MCF 10A (cell line): ENCODE measurements at regions of chr10 and their contacts with region 1.

Region 1: DNA sequence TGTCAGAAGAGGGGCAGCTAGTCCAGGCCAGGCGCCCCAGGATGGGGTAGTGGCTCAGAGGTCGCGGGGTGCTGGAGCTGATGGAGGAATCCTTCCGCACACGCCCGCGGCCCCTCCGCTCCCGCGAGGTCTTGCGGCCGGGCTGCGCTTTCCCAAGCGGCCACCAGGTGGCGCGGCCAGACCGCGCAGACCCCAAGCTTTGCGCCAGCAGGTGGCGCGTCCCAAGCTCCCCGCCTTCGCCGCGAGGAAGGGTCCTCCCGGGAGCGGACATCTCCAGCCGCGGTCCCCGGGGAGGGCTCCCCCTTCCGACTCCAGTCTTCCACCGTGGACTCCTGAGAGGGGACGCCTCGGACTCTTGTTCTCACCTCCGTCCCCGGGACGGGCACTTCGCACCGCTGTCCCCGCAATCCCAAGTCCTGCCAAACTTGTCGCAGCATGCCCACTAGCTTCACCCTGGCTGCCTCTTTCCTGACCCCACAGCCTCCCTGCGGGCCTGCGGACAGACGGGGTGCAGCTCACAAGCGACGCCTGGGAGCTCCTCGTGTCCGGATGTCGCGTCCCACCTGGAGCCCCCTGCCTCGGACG is 19.4 kb downstream of the KCNK18 start:
- DNase-seq: peak; percentile 62
- H3K4me3 Mint-ChIP-seq: peak overlapping the region; percentile 78
- H3K27ac Mint-ChIP-seq: no peak overlapping the region
- H3K4me1 Mint-ChIP-seq: no peaks in the 10 kb centered on the region
- H3K27me3 Mint-ChIP-seq: peaks cover 34% of the 10 kb centered on the region
- CTCF ChIP-seq: peak; percentile 100

Region 2: GRCh38 chr10:117137031-117137910 is 79.4 kb before region 1 on chr10:
- CTCF ChIA-PET with region 1: no interaction called
- POLR2A ChIA-PET with region 1: no interaction called
- intact Hi-C with region 1: no loop called
- DNase-seq: no peak
- H3K4me3 Mint-ChIP-seq: no peak overlapping the region
- H3K27ac Mint-ChIP-seq: no peak overlapping the region
- H3K4me1 Mint-ChIP-seq: no peaks in the 10 kb centered on the region
- H3K27me3 Mint-ChIP-seq: peaks cover 22% of the 10 kb centered on the region
- CTCF ChIP-seq: no peak

Region 3: DNA sequence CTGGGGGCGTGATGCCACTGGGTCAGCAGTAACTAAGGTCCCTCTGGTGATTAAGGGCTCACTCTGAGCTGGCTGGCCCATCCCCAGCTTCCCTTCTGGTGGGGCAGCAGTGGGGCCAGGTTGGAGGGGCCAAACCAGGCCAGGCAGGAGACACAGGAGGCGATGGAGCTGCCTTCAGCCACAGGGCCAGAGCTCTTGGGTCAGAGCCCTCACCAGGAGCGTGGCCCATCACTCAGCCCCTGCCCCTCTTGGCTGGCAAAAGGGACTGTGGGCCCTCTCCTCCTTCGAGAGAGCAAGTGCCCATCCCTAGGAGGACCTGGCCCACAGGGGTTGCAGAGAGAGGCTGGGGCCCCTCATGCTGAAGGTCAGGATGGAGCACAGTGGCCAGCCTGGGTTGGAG is 14.9 kb before region 1 on chr10:
- CTCF ChIA-PET with region 1: interaction called, 25 read pairs
- POLR2A ChIA-PET with region 1: no interaction called
- intact Hi-C with region 1: no loop called
- DNase-seq: no peak
- H3K4me3 Mint-ChIP-seq: no peak overlapping the region
- H3K27ac Mint-ChIP-seq: no peak overlapping the region
- H3K4me1 Mint-ChIP-seq: no peaks in the 10 kb centered on the region
- H3K27me3 Mint-ChIP-seq: peaks cover 11% of the 10 kb centered on the region
- CTCF ChIP-seq: no peak

Region 4: DNA sequence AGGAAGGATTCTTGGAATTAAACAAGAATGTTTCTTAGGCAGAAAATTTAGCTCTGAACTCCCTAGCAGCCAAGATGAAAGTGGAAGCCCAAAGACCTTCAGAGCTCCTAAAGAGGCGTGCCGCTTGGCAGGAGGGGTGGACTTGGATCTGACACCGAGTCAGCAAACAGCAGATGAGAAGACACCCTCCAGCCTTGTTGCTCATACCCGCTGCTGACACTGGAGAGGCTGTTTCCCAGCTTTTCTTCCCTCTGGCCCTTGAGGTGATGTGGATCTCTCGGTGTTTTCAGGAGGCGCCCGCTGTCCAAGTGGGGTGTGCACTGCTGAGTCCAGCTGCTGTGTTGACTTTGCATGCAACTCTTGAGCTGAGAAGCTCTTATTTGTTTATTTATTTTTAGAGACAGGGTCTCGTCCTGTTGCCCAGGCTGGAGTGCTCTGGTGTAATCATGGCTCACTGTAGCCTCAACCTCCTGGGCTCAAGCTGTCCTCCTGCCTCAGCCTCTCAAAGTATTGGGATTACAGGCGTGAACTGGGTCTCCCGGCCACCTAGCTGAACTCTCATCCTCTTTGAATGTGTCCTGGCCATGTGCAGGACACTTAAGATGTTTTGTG is 45.7 kb after region 1 on chr10:
- CTCF ChIA-PET with region 1: interaction called, 15 read pairs
- POLR2A ChIA-PET with region 1: no interaction called
- intact Hi-C with region 1: no loop called
- DNase-seq: no peak
- H3K4me3 Mint-ChIP-seq: no peak overlapping the region
- H3K27ac Mint-ChIP-seq: no peak overlapping the region
- H3K4me1 Mint-ChIP-seq: no peaks in the 10 kb centered on the region
- H3K27me3 Mint-ChIP-seq: peaks cover 54% of the 10 kb centered on the region
- CTCF ChIP-seq: no peak

Region 5: DNA sequence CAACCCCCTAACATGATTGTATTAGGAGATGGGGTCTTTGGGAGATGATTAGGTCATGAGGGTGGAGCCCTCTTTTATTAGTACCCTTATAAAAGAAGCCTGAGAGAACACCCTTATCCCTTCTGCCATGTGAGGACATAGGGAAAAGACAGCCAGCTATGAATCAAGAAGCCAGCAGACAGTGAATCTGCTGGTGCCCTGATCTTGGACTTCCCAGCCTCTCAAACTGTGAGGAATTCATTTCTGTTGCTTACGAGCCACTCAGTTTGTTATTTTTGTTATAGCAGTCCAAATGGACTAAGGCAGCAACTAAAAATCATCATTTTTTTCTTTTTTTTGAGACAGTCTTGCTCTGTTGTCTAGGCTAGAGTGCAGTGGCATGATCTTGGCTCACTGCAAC is 84.0 kb after region 1 on chr10:
- CTCF ChIA-PET with region 1: interaction called, 10 read pairs
- POLR2A ChIA-PET with region 1: no interaction called
- intact Hi-C with region 1: no loop called
- DNase-seq: no peak
- H3K4me3 Mint-ChIP-seq: no peak overlapping the region
- H3K27ac Mint-ChIP-seq: no peak overlapping the region
- H3K4me1 Mint-ChIP-seq: no peaks in the 10 kb centered on the region
- H3K27me3 Mint-ChIP-seq: no peaks in the 10 kb centered on the region
- CTCF ChIP-seq: no peak

Region 6: DNA sequence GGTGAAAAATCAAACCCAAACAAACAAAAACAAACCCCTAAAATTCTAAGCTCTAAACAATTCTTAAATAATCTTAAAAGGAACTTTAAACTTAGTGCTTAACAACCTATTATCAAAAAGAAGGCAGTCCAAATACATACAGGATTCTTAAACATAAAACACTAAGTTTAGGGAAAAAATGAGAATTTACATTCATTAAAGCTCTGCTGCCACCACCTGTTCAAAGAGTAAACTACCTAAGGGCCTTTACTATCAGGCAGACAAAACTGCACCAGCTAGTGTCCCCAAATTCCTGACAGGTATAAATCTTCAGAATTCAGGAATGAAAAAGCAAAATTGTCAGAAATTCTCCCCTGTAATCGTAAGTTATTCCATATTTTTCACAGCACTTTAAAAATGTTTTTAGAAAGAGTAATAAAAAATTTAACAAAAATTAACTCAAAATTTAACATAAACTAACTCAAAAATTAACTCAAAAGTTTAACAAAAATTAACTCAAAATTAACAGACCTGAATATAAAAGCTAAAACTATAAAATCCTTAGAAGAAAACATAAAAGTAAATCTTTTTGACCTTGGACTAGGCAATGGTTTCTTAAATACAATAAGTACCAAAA is 103.5 kb after region 1 on chr10:
- CTCF ChIA-PET with region 1: interaction called, 170 read pairs
- POLR2A ChIA-PET with region 1: interaction called, 53 read pairs
- intact Hi-C with region 1: loop called (anchors 1 kb)
- DNase-seq: peak; percentile 42
- H3K4me3 Mint-ChIP-seq: no peak overlapping the region
- H3K27ac Mint-ChIP-seq: no peak overlapping the region
- H3K4me1 Mint-ChIP-seq: peaks cover 5% of the 10 kb centered on the region
- H3K27me3 Mint-ChIP-seq: no peaks in the 10 kb centered on the region
- CTCF ChIP-seq: peak; percentile 61

Region 7: DNA sequence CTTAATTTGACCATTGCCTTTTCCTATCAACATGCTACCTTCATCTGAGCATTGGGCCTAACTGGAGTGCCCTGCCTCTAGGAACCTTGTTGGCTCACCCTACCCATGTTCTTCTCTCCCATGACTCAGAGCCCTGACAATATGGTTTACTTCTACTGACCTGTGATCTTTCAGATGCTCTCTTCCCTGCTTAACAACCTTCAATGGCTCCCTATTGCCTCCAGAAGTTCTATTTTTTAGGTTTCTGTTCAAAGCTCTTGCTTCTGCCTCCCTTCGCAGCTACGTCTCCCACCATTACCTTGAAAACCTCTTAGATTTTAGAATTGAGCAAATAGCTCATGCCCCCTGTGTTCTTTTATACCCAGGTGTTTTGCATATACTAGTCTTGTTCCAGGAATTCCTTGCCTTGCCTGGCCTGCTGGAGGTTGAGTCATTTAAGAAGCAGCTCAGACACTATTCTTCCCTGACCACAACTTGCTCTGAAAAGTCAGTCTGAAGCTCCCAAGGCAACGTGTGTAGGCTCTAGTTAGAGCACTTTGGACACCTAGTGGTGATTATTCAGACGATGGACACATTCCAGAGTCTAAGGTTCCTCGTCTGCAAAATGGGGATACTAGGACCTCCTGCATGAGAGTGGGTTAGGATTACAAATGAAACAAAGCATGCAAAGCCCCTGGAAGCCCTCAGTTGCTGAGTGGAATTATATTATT is 261.4 kb after region 1 on chr10:
- CTCF ChIA-PET with region 1: interaction called, 8 read pairs
- POLR2A ChIA-PET with region 1: no interaction called
- intact Hi-C with region 1: loop called (anchors 10 kb)
- DNase-seq: peak; percentile 90
- H3K4me3 Mint-ChIP-seq: no peak overlapping the region
- H3K27ac Mint-ChIP-seq: peak overlapping the region; percentile 88
- H3K4me1 Mint-ChIP-seq: peaks cover 17% of the 10 kb centered on the region
- H3K27me3 Mint-ChIP-seq: no peaks in the 10 kb centered on the region
- CTCF ChIP-seq: peak; percentile 20